ENCODE measurements at regions of chr1 and their contacts with region 1.

Region 1: DNA sequence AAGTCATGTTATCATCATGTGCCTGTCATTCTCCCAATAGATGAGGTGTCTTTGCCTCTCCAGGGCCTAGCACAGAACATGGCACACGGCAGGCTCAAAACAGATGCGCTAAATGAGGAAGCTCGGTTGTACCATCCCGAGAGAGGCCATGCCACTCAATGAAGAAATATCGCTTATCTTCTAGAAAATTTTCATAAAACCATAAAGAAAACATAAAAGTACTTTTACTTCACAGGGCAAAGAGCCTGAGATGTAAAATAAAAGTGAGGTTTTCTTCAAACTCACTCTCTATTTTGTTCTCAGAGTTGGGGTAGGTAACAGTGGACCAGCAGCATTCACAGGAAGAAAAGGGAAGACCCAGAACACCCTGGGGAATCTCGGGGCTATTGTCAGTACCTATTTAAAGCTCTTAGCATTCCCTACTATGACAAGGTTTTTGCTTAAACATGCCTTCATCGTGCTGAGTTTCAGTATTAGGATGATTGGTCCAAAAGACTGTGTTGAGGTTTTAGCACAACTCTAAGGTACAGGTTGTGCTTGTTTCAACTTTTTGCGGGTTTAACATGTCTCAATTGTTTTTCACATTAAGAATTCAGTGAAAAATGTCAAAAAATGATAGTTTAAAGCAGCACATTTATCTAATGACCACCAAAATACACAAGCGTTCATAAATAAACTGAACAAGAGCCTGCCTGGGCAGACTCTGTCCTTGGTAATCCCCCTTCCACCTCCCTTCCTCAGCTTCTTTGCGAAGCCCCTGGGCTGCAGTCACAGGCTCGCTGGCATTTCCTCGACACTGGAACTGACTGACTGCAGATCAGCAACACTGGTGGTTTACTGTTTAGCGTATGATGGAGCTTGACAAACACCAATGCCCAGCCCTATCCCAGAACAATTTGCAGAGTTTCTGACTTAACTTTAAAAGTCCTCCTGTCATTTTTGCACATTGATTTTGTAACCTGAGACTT is 55.6 kb downstream of the COQ8A start:
- DNase-seq: no peak
- H3K4me3 Mint-ChIP-seq: no peak overlapping the region
- H3K27ac Mint-ChIP-seq: no peak overlapping the region
- H3K4me1 Mint-ChIP-seq: peaks cover 4% of the 10 kb centered on the region
- H3K27me3 Mint-ChIP-seq: no peaks in the 10 kb centered on the region

Region 2: GRCh38 chr1:225720937-225721336 is 1274.7 kb before region 1 on chr1:
- CTCF ChIA-PET with region 1: no interaction called
- intact Hi-C with region 1: no loop called
- DNase-seq: no peak
- H3K4me3 Mint-ChIP-seq: no peak overlapping the region
- H3K27ac Mint-ChIP-seq: no peak overlapping the region
- H3K4me1 Mint-ChIP-seq: no peaks in the 10 kb centered on the region
- H3K27me3 Mint-ChIP-seq: no peaks in the 10 kb centered on the region

Region 3: DNA sequence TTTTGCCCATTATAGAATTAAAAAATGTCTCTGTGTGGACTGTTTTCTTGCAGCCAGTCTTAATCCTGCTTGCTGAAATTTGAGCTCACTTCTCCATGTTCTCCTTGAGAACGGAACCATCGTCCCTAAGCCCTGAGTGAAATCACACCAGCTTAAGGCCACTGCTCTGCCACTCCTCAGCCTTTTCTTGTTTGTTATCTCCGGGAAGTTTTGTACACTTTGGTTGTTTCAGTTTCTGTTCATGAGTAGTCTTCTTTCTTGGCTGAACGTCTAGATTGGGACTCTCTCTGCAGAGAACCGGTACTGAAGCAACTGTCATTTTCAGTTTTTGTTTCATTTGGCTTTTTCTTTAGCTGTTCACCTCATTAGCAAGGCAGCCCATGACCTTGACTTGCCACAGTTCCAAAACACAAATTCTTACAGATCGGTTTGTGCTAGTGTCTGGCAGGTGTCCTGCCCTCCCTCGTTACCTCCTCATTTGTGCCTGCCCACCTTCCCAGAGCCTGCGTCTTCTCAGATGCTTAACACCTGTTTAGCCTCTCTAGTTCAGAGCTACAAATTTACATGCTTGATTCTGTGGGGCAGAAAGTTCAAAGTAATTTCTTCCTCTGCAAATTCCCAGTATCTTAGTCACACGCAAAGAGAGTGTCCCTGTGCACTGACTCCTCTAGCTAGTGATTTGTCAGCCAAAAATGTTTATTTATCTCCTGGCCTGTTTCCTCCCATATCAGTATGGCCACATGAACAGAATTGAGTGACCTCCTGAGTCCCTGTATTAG is 112.8 kb before region 1 on chr1:
- CTCF ChIA-PET with region 1: no interaction called
- intact Hi-C with region 1: no loop called
- DNase-seq: peak; percentile 57
- H3K4me3 Mint-ChIP-seq: peak overlapping the region; percentile 74
- H3K27ac Mint-ChIP-seq: peak overlapping the region; percentile 93
- H3K4me1 Mint-ChIP-seq: peaks cover 51% of the 10 kb centered on the region
- H3K27me3 Mint-ChIP-seq: no peaks in the 10 kb centered on the region

Region 4: GRCh38 chr1:226984521-226985238 is 11.0 kb before region 1 on chr1:
- CTCF ChIA-PET with region 1: no interaction called
- intact Hi-C with region 1: loop called (anchors 1 kb)
- DNase-seq: no peak
- H3K4me3 Mint-ChIP-seq: no peak overlapping the region
- H3K27ac Mint-ChIP-seq: no peak overlapping the region
- H3K4me1 Mint-ChIP-seq: peaks cover 8% of the 10 kb centered on the region
- H3K27me3 Mint-ChIP-seq: no peaks in the 10 kb centered on the region